ENCODE measurements at regions of chr10 and their contacts with region 1.

Region 1: GRCh38 chr10:63711867-63712716 is 190.9 kb downstream of the REEP3 start:
- DNase-seq: peak in 3 of 4 donors; percentile 83 to 92 (median 89)
- ATAC-seq: peak; percentile 88
- H3K4me3 ChIP-seq: no peak overlapping the region
- H3K27ac ChIP-seq: peak overlapping the region; percentile 61 to 63
- H3K4me1 ChIP-seq: peaks cover 11 to 49% of the 10 kb centered on the region in 2 donors
- H3K27me3 ChIP-seq: no peaks in the 10 kb centered on the region
- CTCF ChIP-seq: no peak

Region 2: GRCh38 chr10:63166742-63167258 is 545.3 kb before region 1 on chr10:
- intact Hi-C with region 1: loop called in 1 of 2 experiments (anchors 5 kb)
- DNase-seq: peak in 2 of 4 donors; percentile 63 to 81
- ATAC-seq: peak; percentile 91
- H3K4me3 ChIP-seq: no peak overlapping the region
- H3K27ac ChIP-seq: no peak overlapping the region
- H3K4me1 ChIP-seq: peaks cover 0 to 7% of the 10 kb centered on the region in 2 donors
- H3K27me3 ChIP-seq: no peaks in the 10 kb centered on the region
- CTCF ChIP-seq: peak; percentile 66 to 75

Region 3: GRCh38 chr10:63644418-63645142 is 67.5 kb before region 1 on chr10:
- intact Hi-C with region 1: loop called in 1 of 2 experiments (anchors 10 kb)
- DNase-seq: no peak
- ATAC-seq: no peak
- H3K4me3 ChIP-seq: no peak overlapping the region
- H3K27ac ChIP-seq: peak overlapping the region; percentile 14 to 28
- H3K4me1 ChIP-seq: no peaks in the 10 kb centered on the region
- H3K27me3 ChIP-seq: no peaks in the 10 kb centered on the region
- CTCF ChIP-seq: no peak